Activated T-helper 2 cell treated with anti-CD3 and anti-CD28 coated beads, Interferon-gamma antibody, Interleukin-2, Interleukin-4, amounts not matched to agents 10 μg/mL and 5 μg/mL and 100 μg/mL, durations not matched to agents 14 hours and 24 hours and 36 hours (primary cell): ENCODE measurements at regions of chr16 and their contacts with region 1.

Region 1: DNA sequence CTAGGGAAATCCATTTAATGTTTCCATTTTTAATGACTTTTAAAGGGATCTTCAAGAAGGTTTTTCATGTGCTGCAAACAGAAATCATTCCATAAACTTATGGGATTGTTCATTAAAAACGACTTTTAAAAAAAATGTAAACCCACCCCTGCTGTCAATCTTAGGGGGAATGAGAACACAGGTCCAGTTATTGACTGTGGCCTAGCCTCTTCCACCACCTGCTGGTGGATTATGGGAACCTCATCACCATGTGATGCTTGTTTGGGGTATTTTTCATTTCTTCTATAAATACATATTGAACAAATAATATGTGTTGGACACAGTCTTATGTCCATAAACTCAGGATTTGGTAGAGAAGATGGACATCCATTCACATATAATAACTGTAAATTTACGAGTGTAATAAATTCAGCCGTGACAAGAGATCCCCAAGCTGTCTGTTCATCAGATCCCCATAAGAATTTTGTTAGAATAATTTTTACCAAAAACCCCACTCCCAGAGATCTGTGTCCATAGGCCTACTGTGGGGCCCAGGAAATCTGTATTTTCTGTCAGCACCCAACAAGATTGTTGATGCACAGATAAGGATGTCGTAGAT is 42.0 kb upstream of the TMC5 start:
- DNase-seq: no peak
- H3K4me3 Mint-ChIP-seq: no peak overlapping the region
- H3K27ac Mint-ChIP-seq: no peak overlapping the region
- H3K4me1 Mint-ChIP-seq: peaks cover 13% of the 10 kb centered on the region
- H3K27me3 Mint-ChIP-seq: peaks cover 2% of the 10 kb centered on the region

Region 2: GRCh38 chr16:19167710-19168370 is 207.8 kb before region 1 on chr16 and contains the start of gene SYT17:
- intact Hi-C with region 1: loop called (anchors 2 kb)
- DNase-seq: peak; percentile 40
- H3K4me3 Mint-ChIP-seq: peak within 1 kb of the TSS; percentile 33
- H3K27ac Mint-ChIP-seq: no peak within 1 kb of the TSS
- H3K4me1 Mint-ChIP-seq: no peaks in the 10 kb centered on the region
- H3K27me3 Mint-ChIP-seq: peaks cover 23% of the 10 kb centered on the region
- total RNA-seq, gene SYT17: 0.34 and 0.57 TPM in 2 replicates

Region 3: GRCh38 chr16:19223235-19224170 is 152.2 kb before region 1 on chr16:
- intact Hi-C with region 1: loop called (anchors 1 kb)
- DNase-seq: peak; percentile 15
- H3K4me3 Mint-ChIP-seq: no peak overlapping the region
- H3K27ac Mint-ChIP-seq: no peak overlapping the region
- H3K4me1 Mint-ChIP-seq: no peaks in the 10 kb centered on the region
- H3K27me3 Mint-ChIP-seq: peaks cover 3% of the 10 kb centered on the region

Region 4: DNA sequence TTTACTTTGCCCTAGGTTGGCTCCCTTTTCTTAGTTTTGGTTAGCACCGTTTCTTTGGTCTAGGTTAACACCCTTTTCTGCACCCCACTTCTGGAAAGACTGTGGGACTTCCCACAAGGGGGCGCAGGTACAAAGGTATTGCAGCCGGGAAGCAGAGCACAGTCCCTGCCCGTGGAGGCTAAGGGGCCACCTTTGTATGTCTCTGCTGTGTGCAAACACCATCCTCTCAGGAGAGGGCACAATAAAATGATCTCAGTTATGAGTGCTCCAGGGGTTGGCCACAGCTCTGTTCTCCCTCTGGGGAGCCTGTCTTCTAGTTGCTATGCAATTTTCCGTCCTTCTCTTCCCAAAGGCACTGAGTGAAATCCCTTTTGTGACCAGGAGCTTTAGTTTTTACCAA is 13.6 kb after region 1 on chr16:
- intact Hi-C with region 1: no loop called
- DNase-seq: peak; percentile 53
- H3K4me3 Mint-ChIP-seq: no peak overlapping the region
- H3K27ac Mint-ChIP-seq: no peak overlapping the region
- H3K4me1 Mint-ChIP-seq: peaks cover 21% of the 10 kb centered on the region
- H3K27me3 Mint-ChIP-seq: peaks cover 53% of the 10 kb centered on the region